Sciatic nerve (tissue), 2 donors: ENCODE measurements at regions of chr1 and their contacts with region 1.

Region 1: DNA sequence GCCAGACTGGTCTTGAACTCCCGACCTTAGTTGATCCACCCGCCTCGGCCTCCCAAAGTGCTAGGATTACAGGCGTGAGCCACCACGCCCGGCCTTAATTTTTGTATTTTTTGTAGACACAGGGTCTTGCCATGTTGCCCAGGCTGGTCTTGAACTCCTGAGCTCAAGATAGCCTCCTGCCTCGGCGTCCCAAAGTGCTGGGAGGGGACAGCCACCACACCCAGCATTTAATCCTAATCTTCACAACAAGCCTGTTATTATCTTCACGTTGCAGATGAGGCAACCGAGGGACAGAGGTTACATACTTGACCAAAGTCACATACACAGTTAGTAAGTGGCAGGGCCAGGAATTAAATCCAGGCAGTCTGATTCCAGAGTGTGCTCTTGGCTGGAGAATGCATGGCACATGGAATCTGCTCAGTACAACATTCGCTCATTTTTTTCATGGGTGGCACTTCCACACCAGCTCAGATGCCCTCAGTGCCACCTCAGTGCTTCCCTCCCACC is 4.8 kb upstream of the GPR37L1 start:
- DNase-seq: no peak
- ATAC-seq: no peak

Region 2: DNA sequence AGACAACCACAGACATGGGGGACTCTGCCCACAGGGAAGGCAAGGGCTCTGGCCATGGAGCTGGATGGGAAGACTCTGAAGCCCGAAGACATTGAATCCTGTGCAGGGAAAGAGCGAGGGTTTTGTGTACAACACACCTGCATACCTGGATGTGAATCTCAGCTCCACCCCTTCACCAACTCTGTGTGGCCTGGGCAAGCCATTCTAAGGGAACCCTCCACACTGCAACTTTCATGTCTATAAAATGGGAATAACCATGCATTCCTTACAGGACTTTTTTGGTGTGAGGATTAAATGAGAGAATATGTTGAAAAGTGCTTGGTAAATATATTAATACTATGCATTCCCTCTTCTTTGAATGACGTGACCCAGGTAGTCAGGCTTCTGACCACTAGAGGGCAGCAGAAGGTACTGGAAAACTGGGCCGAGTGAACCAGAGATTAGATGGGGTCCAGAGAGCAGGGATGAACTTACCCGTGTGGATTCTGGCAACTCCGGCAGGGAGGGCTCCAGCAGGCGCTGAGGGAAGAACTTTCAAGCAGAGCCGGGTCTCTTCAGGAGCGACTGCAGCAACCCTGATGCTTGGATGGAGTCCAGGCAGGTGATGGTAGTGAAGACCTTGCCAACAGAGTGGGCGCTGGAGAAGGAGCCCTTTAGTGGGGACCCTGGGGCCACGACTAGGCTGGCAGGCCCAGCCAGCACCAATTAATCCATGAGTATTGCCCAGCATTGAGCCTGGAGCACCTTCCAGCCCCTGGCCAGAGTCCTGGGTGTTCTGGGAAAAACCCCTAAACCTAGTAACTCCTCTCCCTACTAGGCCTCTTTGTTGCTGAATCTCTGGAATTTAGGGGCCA is 108.4 kb before region 1 on chr1:
- intact Hi-C with region 1: loop called (anchors 5 kb)
- DNase-seq: peak; percentile 87
- ATAC-seq: peak; percentile 88